Posterior vena cava (tissue), 2 donors: ENCODE measurements at regions of chrX and their contacts with region 1.

Region 1: DNA sequence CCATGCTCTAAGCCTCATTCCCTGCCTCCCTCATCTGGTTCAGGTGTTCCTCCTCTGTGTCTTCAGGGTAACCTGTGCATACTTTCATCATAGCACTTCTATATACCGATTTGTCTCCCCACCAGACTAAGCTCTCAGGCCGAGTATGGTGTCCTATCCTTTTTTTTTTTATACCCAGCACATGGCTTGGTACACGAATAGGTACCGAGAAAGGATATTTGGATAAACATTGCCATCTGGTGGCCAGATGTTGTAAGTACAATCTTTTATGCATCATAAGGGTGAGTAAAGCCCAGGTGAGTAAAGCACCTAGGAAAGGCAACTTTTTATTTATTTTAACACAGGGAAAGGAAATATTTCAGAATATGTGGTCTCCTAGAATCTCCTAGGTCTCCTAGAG is 68.4 kb downstream of the MID2 start:
- DNase-seq: no peak

Region 2: DNA sequence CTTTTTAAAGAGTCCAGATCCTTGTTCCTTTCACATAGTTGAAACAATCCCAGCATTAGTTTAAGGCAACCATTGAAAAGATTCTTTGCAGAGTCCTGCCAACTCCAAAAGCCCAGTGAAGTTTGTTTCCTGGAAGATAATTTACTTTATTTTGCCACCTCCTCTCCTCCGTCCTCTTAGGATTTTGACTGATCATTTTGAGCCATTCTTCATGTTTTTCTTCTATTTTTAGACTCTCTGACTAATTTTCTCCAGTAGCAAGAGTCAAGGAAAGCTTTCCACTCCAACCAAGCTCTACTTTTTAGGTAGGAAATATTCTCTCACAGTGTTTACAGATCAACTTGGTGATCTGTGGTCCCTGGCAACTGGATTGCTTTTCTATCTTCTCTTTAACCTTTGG is 106.2 kb before region 1 on chrX:
- intact Hi-C with region 1: no loop called
- DNase-seq: no peak

Region 3: GRCh38 chrX:108148524-108148923 is 254.5 kb after region 1 on chrX:
- intact Hi-C with region 1: loop called in 1 of 2 experiments (anchors 5 kb)
- DNase-seq: no peak